PC-9 (cell line): ENCODE measurements at regions of chr9 and their contacts with region 1.

Region 1: DNA sequence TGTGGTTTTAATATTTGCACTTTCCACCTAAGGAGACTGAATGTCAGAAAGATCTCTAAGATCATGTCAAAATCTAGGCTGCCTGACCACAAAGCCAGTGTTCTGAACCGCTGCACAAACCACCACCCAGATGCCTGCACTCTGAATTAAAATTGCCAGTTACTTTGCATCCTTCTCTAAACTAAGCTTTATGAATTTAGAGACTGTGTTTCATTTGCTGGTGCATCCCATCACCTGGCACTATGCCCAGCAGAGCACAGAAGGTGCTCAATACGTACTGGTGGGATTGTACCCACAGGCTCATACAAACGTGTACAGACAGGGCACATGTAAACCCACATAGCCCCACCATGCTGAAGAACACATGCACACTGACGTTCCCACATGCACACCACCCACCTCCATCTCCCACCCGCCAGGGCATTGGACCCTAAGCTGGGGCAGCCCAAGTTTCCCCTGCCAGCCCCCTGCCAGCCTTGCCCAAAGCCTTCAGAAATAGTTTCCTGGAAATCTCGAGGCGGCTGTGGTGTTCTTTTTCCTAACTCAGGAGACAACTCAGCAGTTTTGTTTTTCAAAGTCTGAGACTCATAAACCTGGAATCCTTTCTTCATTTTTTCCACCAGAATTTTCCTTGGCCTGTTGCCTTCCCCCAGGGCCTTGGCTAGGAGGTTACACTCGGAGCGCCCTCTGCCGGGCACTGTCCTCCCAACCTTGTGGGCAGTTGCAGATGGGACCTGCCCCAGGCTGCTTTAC is 9.6 kb upstream of the TRAF1 start:
- DNase-seq: peak; percentile 80 to 93
- H3K4me3 ChIP-seq: no peak overlapping the region
- H3K27ac ChIP-seq: peak overlapping the region; percentile 25; the same call in 1 of the 2 replicates
- H3K4me1 ChIP-seq: peaks cover 22% of the 10 kb centered on the region
- H3K27me3 ChIP-seq: no peaks in the 10 kb centered on the region
- CTCF ChIP-seq: peak; percentile 93

Region 2: GRCh38 chr9:120531683-120532300 is 404.4 kb before region 1 on chr9:
- CTCF ChIA-PET with region 1: no interaction called
- POLR2A ChIA-PET with region 1: no interaction called
- intact Hi-C with region 1: loop called (anchors 5 kb)
- DNase-seq: peak in 1 of 2 experiments; percentile 12
- H3K4me3 ChIP-seq: no peak overlapping the region
- H3K27ac ChIP-seq: no peak overlapping the region
- H3K4me1 ChIP-seq: peaks cover 15% of the 10 kb centered on the region
- H3K27me3 ChIP-seq: no peaks in the 10 kb centered on the region
- CTCF ChIP-seq: peak; percentile 65

Region 3: DNA sequence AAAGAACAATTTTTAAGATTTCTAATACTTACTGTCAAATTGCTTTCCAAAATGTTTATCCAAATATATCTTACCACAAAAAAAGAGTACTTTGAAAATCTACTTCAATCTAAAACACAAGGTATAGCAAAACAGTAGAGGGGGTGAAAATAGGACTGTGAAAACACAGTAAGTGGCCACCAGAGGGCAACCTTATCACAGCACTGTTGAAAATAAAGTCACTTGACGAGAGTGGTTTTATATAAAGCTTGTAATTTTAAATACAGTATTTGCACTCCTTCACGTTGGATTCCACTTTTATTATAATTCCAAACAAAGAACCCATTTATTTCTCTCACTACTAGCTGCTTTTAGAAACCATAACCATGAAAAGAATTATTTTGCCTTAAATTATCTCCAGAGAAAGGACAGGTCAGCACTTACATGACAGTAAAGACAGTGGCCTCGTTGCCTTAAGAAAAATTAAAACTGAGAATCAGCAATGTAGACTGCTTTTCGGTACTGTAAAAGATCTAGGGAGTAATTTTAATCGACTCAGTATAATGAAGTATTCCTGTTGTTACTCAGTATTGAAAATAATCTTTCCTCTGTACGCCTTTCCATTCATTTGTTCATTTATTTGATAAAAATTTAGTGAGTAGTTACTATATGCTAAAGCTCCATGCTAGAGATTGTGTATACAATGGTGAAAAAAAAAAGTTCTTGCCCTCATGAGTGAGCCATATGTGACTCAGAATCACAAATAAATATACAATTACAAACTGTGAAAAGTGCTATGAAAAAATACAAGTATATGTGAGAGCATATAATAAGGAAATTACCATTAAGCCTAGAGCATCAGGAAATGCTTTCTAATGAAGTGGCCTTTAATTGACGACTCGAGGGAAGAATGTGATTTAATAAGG is 316.2 kb before region 1 on chr9:
- CTCF ChIA-PET with region 1: interaction called, 3 read pairs
- POLR2A ChIA-PET with region 1: no interaction called
- intact Hi-C with region 1: loop called (anchors 1 kb)
- DNase-seq: peak; percentile 49
- H3K4me3 ChIP-seq: no peak overlapping the region
- H3K27ac ChIP-seq: peak overlapping the region; percentile 41
- H3K4me1 ChIP-seq: peaks cover 20% of the 10 kb centered on the region
- H3K27me3 ChIP-seq: no peaks in the 10 kb centered on the region
- CTCF ChIP-seq: peak; percentile 89

Region 4: GRCh38 chr9:120730661-120731514 is 205.3 kb before region 1 on chr9:
- CTCF ChIA-PET with region 1: no interaction called
- POLR2A ChIA-PET with region 1: no interaction called
- intact Hi-C with region 1: no loop called
- DNase-seq: peak; percentile 92 to 100
- H3K4me3 ChIP-seq: no peak overlapping the region; the same call in 1 of the 2 replicates
- H3K27ac ChIP-seq: peak overlapping the region; percentile 87
- H3K4me1 ChIP-seq: peaks cover 73% of the 10 kb centered on the region
- H3K27me3 ChIP-seq: no peaks in the 10 kb centered on the region
- CTCF ChIP-seq: no peak

Region 5: DNA sequence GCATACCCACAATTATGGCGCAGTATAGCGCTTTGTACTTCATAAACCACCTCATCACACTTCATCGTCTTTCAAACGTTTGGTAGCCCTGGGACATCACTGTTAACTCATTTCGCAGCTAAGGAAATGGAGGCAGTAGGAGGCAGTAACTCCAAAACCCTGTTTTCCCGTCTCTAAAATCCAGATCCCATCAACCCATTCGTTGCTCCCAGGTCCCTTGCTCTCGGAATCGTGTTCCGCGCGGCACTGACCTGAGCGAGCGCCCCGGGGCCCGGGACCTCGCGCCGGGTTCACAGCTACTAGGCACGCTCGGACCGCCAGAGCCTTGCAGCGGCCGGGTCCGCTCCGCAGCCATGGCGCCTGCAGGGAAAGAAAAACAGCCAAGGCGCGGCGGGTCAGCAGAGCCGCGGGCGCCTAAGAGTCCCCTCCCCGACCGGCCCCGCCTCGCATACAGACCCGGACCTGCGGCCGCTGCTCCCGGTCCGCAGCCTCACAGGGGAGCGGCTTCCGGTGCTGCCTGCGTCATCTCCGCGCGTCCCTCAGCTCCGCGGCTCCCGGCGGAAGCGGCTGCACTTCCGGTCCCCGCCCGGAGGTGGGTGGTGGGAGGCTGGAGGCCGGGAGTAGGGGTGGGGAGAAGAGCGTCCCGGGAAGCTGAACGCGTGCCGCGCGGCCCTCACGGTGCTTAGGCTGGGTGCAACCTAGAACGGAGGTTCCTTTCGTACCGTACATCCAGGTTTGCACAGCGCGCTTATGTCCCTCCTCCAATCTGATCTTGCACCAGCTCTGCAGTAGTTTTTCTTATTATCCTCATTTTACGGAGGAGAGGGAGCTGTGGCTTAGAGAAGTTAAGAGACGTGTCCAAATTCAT is 143.1 kb before region 1 on chr9 and contains the start of gene FBXW2:
- CTCF ChIA-PET with region 1: no interaction called
- POLR2A ChIA-PET with region 1: interaction called, 7 read pairs
- intact Hi-C with region 1: loop called (anchors 1 kb)
- DNase-seq: peak; percentile 78 to 94
- H3K4me3 ChIP-seq: peak within 1 kb of the TSS; percentile 83
- H3K27ac ChIP-seq: peak within 1 kb of the TSS; percentile 74
- H3K4me1 ChIP-seq: peaks cover 26% of the 10 kb centered on the region
- H3K27me3 ChIP-seq: no peaks in the 10 kb centered on the region
- CTCF ChIP-seq: no peak
- total RNA-seq, gene FBXW2: 69.6 and 77.7 TPM in 2 replicates

Region 6: GRCh38 chr9:120868676-120869359 is 67.4 kb before region 1 on chr9:
- CTCF ChIA-PET with region 1: interaction called, 3 read pairs
- POLR2A ChIA-PET with region 1: no interaction called
- intact Hi-C with region 1: loop called (anchors 2 kb)
- DNase-seq: peak; percentile 92 to 99
- H3K4me3 ChIP-seq: peak overlapping the region; percentile 21; the same call in 1 of the 2 replicates
- H3K27ac ChIP-seq: no peak overlapping the region
- H3K4me1 ChIP-seq: peaks cover 21% of the 10 kb centered on the region
- H3K27me3 ChIP-seq: no peaks in the 10 kb centered on the region
- CTCF ChIP-seq: no peak

Region 7: DNA sequence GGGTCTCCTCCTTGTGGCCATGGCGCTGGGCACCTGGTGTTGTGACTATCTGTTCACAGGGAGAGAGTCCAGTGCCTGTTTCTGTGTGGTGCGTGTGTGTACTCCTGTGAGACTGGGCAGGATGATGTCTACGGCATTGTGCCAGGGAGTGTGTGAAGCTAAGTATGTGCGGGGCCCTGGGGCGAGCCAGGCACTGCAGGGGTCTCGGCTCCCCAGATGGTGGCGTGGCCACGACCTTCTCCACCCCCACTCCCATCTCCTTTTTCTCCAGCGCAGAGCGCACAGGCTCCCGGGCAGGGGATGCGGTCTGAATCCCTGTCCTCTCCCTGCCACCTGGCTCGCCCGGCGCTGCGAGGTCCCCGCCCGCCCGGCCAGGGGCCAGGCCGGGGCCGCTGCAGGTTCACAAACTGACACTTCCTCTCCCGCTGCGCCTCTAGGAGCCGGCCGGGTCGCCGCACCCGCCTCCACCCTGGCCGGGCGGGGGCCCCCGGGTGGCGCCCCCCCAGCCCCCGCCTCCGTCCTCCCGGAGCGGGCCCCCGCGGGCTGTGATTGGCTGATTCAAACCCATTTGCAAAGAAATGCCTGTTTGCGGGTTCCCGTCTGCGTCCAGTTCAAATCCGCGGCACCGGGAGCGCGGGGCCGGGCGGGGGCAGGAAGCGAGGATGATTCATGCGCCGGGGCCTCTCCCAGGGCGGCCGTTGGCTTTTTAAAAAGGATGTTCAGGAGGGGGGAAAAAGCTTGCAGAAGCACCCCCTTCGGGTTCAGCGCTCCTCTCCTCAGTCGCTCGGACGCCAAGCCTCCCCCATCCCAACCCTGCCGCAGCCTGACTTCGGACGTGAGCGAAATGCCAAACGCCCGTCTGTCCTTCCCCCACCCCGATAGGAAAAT is 60.0 kb before region 1 on chr9:
- CTCF ChIA-PET with region 1: interaction called, 3 read pairs
- POLR2A ChIA-PET with region 1: no interaction called
- intact Hi-C with region 1: loop called (anchors 1 kb)
- DNase-seq: peak; percentile 73 to 95
- H3K4me3 ChIP-seq: peak overlapping the region; percentile 87
- H3K27ac ChIP-seq: peak overlapping the region; percentile 76
- H3K4me1 ChIP-seq: peaks cover 49% of the 10 kb centered on the region
- H3K27me3 ChIP-seq: no peaks in the 10 kb centered on the region
- CTCF ChIP-seq: no peak